Activated CD8-positive, alpha-beta T cell treated with anti-CD3 and anti-CD28 coated beads for 36 hours (primary cell): ENCODE measurements at regions of chr2 and their contacts with region 1.

Region 1: DNA sequence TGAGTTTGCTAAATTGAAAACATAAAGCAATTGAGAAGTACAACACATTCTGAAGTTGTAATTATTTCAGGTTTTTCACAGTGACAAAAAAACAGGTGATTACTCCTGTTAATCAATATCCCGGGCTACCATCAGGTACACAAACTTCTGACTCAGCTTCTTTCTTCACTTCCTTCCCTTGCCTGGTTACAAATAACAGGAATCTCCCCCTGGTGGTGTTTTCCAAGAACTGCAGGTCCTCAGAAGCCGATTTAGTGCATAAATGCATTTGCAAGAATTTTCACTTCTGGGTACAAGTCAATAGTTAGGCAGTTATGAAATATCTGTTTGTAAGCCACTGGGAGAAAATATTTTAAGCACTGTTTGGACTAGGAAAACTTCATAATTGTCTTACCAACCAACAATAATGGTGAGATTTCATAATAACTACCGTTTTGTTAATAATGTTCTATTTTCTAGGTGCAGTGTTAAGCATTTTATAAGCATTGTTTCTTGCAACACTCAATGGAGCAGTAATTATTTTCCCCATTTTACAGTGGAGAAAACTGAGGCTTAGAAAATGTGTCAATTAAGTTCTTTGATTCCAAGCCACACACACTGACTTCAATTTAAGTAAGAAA is 12.4 kb upstream of the GMCL1 start:
- DNase-seq: peak; percentile 88
- ATAC-seq: peak; percentile 89
- H3K4me3 Mint-ChIP-seq: no peak overlapping the region
- H3K27ac Mint-ChIP-seq: no peak overlapping the region
- H3K4me1 Mint-ChIP-seq: peaks cover 4% of the 10 kb centered on the region
- H3K27me3 Mint-ChIP-seq: no peaks in the 10 kb centered on the region
- CTCF ChIP-seq: peak; percentile 94

Region 2: DNA sequence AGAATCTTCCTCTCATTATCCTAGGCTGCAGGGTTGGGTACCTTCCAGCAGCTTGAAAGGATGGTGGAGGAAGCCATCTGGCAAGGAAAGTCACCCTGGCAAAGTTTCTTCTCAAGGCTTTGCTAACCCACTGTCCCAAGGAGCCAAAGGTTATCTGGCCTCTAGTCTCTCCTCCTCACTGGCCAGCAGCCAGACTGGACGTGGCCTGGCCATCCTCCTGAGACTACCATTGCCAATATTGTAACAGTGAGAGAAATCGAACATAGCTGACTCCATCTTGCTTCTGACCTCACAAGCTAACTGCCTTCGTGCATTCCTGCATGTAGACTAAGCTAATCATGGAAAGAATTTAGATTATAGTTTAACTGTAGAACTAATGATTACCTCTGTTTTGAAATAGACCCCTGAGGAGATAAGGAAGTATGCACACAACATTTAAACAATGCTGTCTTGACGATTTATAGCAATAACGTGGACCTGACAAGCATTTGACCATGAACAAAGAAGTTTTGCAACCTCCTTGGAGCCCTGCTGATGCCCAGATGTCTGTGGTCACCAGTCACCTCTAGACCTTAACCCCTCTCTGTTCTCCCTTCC is 82.9 kb before region 1 on chr2:
- CTCF ChIA-PET with region 1: interaction called, 37 read pairs
- POLR2A ChIA-PET with region 1: no interaction called
- intact Hi-C with region 1: no loop called
- DNase-seq: no peak
- ATAC-seq: no peak
- H3K4me3 Mint-ChIP-seq: no peak overlapping the region
- H3K27ac Mint-ChIP-seq: no peak overlapping the region
- H3K4me1 Mint-ChIP-seq: no peaks in the 10 kb centered on the region
- H3K27me3 Mint-ChIP-seq: no peaks in the 10 kb centered on the region
- CTCF ChIP-seq: no peak

Region 3: DNA sequence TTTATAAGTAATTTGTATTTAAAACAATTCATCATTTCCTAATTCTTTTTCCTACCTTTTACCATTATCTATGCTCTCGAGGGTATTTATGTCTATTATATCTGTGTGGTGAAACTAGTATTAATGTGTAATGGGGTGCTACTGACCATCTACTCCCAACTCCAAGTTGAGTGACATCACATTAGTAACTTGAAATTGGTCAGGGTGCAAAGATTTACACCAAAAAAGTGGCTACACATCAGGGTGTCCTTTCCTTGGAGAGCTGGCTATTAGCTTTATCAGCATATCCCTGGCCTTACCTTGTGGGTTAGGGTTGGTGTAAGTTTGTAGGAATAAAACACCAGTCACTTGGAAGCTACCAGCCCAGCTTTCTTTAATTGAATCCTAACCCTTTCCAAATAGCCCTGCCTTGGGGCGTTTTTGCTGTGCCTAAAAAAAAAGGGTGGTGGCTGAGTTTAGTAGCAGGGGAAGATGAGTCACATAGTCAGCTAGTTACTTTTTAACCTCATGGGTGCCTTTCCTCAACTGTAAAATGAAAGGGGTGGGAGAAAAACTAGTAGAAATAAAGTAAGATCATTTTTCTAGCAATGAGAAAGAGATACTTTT is 61.1 kb before region 1 on chr2:
- CTCF ChIA-PET with region 1: interaction called, 27 read pairs
- POLR2A ChIA-PET with region 1: interaction called, 3 read pairs
- intact Hi-C with region 1: no loop called
- DNase-seq: no peak
- ATAC-seq: peak; percentile 75
- H3K4me3 Mint-ChIP-seq: no peak overlapping the region
- H3K27ac Mint-ChIP-seq: no peak overlapping the region
- H3K4me1 Mint-ChIP-seq: peaks cover 7% of the 10 kb centered on the region
- H3K27me3 Mint-ChIP-seq: no peaks in the 10 kb centered on the region
- CTCF ChIP-seq: no peak

Region 4: DNA sequence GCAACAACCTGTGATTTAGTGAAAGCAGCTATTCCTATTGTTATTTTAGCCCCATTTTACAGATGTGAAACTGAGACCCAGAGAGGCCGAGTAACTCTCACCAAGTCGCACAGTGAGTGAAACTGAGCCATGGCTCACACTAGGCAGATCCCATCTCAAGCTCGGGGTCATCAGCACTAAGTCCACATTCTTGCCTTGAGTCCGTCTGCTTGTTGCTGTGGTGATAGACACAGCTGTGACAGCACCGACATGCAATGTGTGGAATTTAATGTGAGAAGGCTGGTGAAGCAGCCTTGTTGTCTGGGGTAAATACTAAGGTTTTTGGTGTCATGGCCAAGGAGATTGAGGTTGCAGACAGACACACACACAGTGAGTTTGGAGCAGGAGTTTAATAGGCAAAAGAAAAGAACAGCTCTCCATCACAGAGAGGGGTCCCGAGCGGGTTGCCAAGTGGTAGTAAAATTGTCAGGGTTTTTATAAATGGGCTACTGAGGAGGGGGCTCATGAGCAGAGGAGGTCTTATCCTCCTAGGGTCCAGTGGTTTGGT is 27.8 kb before region 1 on chr2:
- CTCF ChIA-PET with region 1: interaction called, 25 read pairs
- POLR2A ChIA-PET with region 1: no interaction called
- intact Hi-C with region 1: no loop called
- DNase-seq: no peak
- ATAC-seq: no peak
- H3K4me3 Mint-ChIP-seq: no peak overlapping the region
- H3K27ac Mint-ChIP-seq: no peak overlapping the region
- H3K4me1 Mint-ChIP-seq: peaks cover 15% of the 10 kb centered on the region
- H3K27me3 Mint-ChIP-seq: no peaks in the 10 kb centered on the region
- CTCF ChIP-seq: no peak

Region 5: DNA sequence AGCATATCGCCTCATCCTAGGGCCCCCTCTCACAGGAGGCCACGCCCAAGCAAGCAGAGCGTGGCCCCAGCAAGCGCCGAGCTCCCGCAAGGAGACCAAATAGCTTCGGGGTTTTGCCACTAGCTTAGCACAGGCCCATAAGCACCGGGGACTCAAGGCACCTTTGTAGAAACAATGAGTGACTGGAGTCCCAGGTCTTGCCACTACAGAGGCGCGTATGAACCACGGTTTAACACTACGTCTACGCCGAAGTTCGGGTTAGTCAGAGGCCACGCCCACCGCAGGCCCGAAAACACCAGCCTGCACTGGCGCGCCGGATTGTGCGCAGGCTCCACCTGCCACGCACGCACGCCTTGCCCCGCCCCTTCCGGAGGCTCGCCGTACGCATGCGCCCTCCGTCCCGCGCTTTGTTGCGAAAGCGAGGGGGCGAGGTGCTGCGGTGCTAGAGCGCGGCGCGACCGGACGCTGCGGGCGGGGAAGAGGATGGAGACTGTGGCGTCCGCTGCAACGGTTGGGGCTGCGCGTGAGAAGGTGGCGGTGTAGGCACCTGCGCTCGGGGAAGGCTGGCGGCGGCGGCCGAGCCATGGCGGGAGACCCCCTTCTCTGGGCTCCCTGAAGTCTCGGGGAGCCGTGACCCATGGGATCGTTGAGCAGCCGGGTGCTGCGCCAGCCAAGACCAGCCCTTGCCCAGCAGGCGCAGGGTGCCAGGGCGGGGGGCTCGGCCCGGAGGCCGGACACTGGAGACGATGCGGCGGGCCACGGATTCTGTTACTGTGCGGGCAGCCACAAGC is 12.4 kb after region 1 on chr2 and contains the start of gene GMCL1:
- CTCF ChIA-PET with region 1: interaction called, 49 read pairs
- POLR2A ChIA-PET with region 1: interaction called, 6 read pairs
- intact Hi-C with region 1: no loop called
- DNase-seq: peak; percentile 99
- ATAC-seq: peak; percentile 96
- H3K4me3 Mint-ChIP-seq: peak within 1 kb of the TSS; percentile 86
- H3K27ac Mint-ChIP-seq: peak within 1 kb of the TSS; percentile 95
- H3K4me1 Mint-ChIP-seq: peaks cover 46% of the 10 kb centered on the region
- H3K27me3 Mint-ChIP-seq: no peaks in the 10 kb centered on the region
- CTCF ChIP-seq: no peak
- total RNA-seq, gene GMCL1: 18.1 to 20.4 TPM

Region 6: DNA sequence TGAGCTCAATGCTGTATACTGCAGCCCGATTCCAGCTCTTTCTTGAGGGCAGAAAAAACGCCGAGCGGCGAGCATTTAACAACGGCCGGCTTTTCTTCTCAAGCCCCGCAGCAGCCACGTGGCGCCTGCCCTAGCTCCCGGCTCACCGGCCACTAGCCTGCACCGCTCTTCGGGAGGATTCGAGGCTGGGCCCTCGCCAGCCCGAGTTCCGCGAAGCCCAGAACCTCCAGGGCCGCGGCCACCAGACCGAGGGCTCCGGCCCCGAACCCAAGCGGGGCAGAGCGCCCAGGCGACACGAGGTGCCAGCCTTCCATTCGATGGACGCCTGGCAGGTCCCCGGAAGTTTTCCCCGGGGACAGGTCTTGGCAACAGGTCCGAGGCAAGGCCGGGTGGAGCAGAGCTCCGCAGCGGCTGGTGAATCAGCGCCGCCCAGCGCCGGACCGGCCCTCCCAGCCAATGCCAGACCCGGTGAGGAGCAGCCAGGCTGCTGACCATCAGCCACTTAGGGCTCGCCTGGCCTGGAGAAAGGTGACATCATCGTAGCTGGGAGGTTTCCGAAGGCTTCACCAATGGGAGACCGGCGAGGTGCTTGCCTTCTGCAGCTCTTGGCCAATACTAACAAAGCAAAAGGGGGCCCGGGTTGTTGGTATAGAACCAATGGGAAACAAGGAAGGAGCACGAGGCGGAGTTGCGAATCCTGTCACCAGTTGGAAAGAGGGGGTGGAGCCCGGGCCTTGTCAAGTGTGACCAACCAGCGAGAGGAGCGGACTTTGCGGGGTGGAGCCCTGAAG is 97.3 kb after region 1 on chr2:
- CTCF ChIA-PET with region 1: no interaction called
- POLR2A ChIA-PET with region 1: no interaction called
- intact Hi-C with region 1: no loop called
- DNase-seq: peak; percentile 100
- ATAC-seq: peak; percentile 96
- H3K4me3 Mint-ChIP-seq: peak overlapping the region; percentile 86
- H3K27ac Mint-ChIP-seq: peak overlapping the region; percentile 92
- H3K4me1 Mint-ChIP-seq: peaks cover 37% of the 10 kb centered on the region
- H3K27me3 Mint-ChIP-seq: no peaks in the 10 kb centered on the region
- CTCF ChIP-seq: no peak